ENCODE measurements at regions of chr1 and their contacts with region 1.

Region 1: DNA sequence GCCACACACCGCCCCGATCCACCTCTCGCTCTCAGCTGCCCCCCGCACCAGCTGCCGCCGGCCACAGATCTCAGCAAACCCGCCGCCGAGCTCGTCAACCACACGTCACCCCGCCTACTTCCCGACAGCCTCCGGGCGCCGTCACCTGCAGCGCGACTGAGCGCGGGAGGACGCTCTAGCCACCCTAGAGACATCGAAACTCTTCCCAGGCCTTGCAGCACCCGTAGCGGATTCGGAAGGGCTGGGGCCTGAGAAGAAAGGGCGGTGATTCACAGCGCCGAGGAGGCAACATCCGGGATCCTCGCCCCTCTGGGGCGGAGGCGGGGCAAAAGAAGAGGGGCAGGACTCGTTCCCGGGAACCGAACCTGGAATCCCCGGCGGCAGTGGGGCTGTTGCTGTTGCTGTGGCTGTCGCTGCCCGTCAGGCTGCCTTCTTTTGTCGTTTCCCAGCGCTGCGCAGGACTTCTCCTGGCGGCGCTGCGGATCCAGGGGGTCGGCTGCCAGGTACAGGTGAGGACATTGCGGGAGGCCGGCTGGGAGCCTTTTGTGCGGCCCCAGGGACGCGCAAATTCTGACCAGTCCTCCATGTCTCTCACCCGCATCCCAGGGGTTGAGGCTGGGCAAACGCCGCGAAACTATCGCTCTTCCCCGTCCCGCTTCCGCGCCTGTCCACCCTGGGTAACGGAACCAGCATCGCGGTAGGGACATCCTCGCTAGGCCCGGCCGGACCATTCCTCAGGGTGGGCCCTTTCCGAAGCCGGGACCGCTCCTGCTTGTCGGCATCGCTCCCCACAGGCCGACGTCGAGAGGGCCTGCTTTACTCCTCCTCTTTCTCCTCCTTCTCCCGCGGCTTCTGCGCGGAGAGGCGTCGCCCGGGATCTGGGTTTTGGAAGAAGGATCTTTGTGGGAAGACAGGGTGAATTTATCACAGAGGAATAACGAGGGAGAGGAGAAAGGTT is at the starts of genes RO60 and UCHL5:
- DNase-seq: peak; percentile 79 to 96 (median 94)
- ATAC-seq: peak; percentile 98
- H3K4me3 ChIP-seq: peak within 1 kb of the TSS; percentile 96
- H3K4me3 Mint-ChIP-seq: peak within 1 kb of the TSS; percentile 93 to 100 (median 98)
- H3K27ac ChIP-seq: peak within 1 kb of the TSS; percentile 89
- H3K27ac Mint-ChIP-seq: peak within 1 kb of the TSS; percentile 97 to 100 (median 98)
- H3K4me1 ChIP-seq: peaks cover 22 to 30% of the 10 kb centered on the region in 2 donors
- H3K4me1 Mint-ChIP-seq: peaks cover 47 to 78% (median 72%) of the 10 kb centered on the region in 7 donors
- H3K27me3 ChIP-seq: no peaks in the 10 kb centered on the region
- H3K27me3 Mint-ChIP-seq: no peaks in the 10 kb centered on the region
- total RNA-seq, gene RO60: 49.8 to 75.1 (median 67.2) TPM
- total RNA-seq, gene UCHL5: 20.2 to 48.6 (median 31.8) TPM

Region 2: DNA sequence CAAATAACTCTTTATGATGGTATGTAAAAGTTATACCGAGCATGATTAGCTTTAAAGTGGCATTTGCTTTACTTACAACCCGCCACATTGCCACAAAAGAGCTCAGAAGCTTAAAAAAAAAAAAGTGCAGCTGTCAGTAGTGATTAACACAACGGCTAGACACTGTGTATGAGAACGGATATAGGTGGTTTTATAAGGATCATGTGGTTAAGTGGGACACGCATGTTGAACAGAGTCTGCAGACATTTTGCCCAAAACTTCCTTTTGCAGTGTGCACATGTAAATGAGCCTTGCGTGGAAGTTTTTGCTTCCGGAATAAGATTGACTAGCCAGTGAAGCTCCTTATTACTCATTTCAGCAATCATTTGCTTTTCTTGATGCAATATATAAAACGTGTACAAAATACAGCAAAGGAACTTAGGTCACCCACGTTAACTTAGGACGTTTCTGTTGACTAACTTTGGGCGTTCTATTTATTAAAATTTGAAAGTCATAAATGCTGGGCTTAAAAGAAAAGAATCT is 542.7 kb before region 1 on chr1:
- CTCF ChIA-PET with region 1: no interaction called
- POLR2A ChIA-PET with region 1: interaction called, 3 read pairs
- intact Hi-C with region 1: loop called (anchors 1 kb)
- DNase-seq: peak in 8 of 9 donors; percentile 46 to 91 (median 87)
- ATAC-seq: peak; percentile 96
- H3K4me3 ChIP-seq: peak overlapping the region; percentile 27
- H3K4me3 Mint-ChIP-seq: peak overlapping the region; percentile 42 to 86 (median 78)
- H3K27ac ChIP-seq: peak overlapping the region; percentile 60
- H3K27ac Mint-ChIP-seq: peak overlapping the region; percentile 77 to 98 (median 93)
- H3K4me1 ChIP-seq: peaks cover 18 to 21% of the 10 kb centered on the region in 2 donors
- H3K4me1 Mint-ChIP-seq: peaks cover 32 to 56% (median 44%) of the 10 kb centered on the region in 7 donors
- H3K27me3 ChIP-seq: no peaks in the 10 kb centered on the region
- H3K27me3 Mint-ChIP-seq: no peaks in the 10 kb centered on the region

Region 3: GRCh38 chr1:193042766-193043691 is 16.5 kb before region 1 on chr1:
- CTCF ChIA-PET with region 1: no interaction called
- POLR2A ChIA-PET with region 1: interaction called, 8 read pairs
- intact Hi-C with region 1: loop called in 1 of 2 experiments (anchors 1 kb)
- DNase-seq: no peak
- ATAC-seq: no peak
- H3K4me3 ChIP-seq: no peak overlapping the region
- H3K4me3 Mint-ChIP-seq: no peak overlapping the region
- H3K27ac ChIP-seq: no peak overlapping the region
- H3K27ac Mint-ChIP-seq: peak overlapping the region in 5 of 9 donors; percentile 3 to 74 (median 36)
- H3K4me1 ChIP-seq: no peaks in the 10 kb centered on the region
- H3K4me1 Mint-ChIP-seq: peaks cover 9 to 31% (median 23%) of the 10 kb centered on the region in 7 donors
- H3K27me3 ChIP-seq: no peaks in the 10 kb centered on the region
- H3K27me3 Mint-ChIP-seq: no peaks in the 10 kb centered on the region

Region 4: DNA sequence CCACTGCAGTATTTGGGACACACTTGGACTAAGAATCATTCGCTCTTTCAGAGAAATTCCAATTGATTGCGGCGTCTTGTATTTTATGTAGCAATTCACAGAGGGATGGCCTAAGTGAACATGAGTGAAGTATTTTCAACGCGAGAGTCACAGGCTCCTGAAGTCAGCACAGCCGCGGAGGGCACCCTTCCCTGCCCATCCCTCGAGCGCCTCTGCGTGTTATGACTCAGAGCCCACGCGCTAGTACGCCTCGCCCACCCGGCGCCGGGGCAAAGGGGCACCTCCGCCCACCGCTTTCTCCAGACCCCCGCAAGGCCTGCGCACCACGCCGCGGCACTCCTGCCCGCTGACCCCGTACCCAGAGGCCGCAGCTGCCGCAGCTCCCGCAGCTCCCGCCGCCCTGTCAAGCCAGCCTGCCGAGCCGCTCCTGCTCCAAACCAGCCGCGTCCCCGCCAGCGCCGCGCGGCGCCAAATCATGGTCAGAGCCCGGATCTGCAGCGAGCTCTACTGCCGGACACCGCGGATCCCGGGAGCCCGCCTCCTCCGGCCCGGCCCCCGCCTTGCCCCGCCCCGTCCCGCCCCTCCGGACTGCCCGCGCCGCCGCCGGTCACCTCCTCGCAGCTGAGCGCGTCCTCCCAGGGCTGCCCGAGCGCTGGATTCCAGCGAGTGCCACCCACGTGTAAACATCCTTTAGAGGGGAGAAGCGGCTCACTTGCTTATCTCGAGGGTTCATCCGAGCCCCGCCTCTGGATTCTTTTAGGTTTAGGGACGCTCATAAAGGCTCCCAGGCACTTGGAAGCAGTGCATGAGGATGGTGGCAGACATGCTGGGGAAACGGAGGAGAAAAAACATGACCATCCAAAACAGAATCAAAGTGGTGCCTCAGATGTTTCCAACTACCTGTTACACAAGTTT is 45.6 kb after region 1 on chr1 and contains the start of gene GLRX2:
- CTCF ChIA-PET with region 1: no interaction called
- POLR2A ChIA-PET with region 1: interaction called, 7 read pairs
- intact Hi-C with region 1: loop called (anchors 1 kb)
- DNase-seq: peak; percentile 30 to 68 (median 48)
- ATAC-seq: peak; percentile 91
- H3K4me3 ChIP-seq: peak within 1 kb of the TSS; percentile 67
- H3K4me3 Mint-ChIP-seq: peak within 1 kb of the TSS; percentile 91 to 98 (median 94)
- H3K27ac ChIP-seq: peak within 1 kb of the TSS; percentile 57
- H3K27ac Mint-ChIP-seq: peak within 1 kb of the TSS; percentile 75 to 94 (median 81)
- H3K4me1 ChIP-seq: peaks cover 3 to 16% of the 10 kb centered on the region in 2 donors
- H3K4me1 Mint-ChIP-seq: peaks cover 13 to 28% (median 21%) of the 10 kb centered on the region in 7 donors
- H3K27me3 ChIP-seq: no peaks in the 10 kb centered on the region
- H3K27me3 Mint-ChIP-seq: peaks cover 0 to 9% (median 0%) of the 10 kb centered on the region in 5 donors
- total RNA-seq, gene GLRX2: 6.8 to 18.8 (median 11.4) TPM

Region 5: DNA sequence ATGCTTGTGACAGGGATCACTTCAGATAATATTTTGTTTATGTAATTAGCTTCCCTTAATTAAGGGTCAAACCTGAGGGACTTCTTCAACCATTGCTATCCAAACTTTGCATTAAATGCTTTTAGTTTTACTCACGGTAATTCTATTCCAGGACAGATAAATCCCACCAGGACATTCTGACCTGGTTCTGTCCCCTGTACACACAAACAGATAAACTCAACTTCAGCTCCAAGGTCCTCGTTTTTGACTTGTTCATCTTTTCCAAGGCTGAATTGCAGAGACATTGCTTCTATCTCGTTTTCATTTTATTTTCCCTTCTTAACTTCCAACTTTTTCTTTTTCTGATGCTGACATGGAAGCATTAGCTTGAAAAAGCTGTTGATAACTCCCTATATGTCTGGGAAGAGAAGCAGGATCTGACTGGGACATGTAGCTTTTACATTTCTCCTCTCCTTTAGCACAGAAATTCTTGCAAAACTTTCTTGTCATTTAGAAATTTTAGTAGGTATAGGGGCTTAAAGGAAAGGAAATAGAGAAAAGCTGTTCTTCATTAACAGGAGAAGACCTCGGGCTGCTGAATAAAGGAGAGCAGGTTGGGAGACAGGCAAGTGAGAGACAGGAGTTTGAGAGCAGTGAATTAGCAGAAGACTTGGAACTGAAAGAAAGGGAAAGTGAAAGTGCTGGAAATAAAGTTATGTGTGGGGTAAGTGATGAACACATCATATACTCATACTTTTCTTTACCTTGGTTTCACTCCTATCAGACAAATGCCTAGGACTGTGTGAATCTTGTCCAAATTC is 358.6 kb after region 1 on chr1:
- CTCF ChIA-PET with region 1: no interaction called
- POLR2A ChIA-PET with region 1: no interaction called
- intact Hi-C with region 1: loop called in 1 of 2 experiments (anchors 10 kb)
- DNase-seq: peak in 7 of 9 donors; percentile 16 to 64 (median 47)
- ATAC-seq: peak; percentile 81
- H3K4me3 ChIP-seq: peak overlapping the region; percentile 45
- H3K4me3 Mint-ChIP-seq: peak overlapping the region; percentile 68 to 93 (median 87)
- H3K27ac ChIP-seq: peak overlapping the region; percentile 58
- H3K27ac Mint-ChIP-seq: peak overlapping the region; percentile 88 to 95 (median 91)
- H3K4me1 ChIP-seq: peaks cover 16 to 19% of the 10 kb centered on the region in 2 donors
- H3K4me1 Mint-ChIP-seq: peaks cover 15 to 57% (median 46%) of the 10 kb centered on the region in 7 donors
- H3K27me3 ChIP-seq: no peaks in the 10 kb centered on the region
- H3K27me3 Mint-ChIP-seq: no peaks in the 10 kb centered on the region

Region 6: GRCh38 chr1:193629875-193630274 is 570.3 kb after region 1 on chr1:
- CTCF ChIA-PET with region 1: no interaction called
- POLR2A ChIA-PET with region 1: no interaction called
- intact Hi-C with region 1: no loop called
- DNase-seq: no peak
- ATAC-seq: no peak
- H3K4me3 ChIP-seq: no peak overlapping the region
- H3K4me3 Mint-ChIP-seq: no peak overlapping the region
- H3K27ac ChIP-seq: no peak overlapping the region
- H3K27ac Mint-ChIP-seq: no peak overlapping the region
- H3K4me1 ChIP-seq: no peaks in the 10 kb centered on the region
- H3K4me1 Mint-ChIP-seq: peaks cover 5 to 14% (median 10%) of the 10 kb centered on the region in 7 donors
- H3K27me3 ChIP-seq: no peaks in the 10 kb centered on the region
- H3K27me3 Mint-ChIP-seq: peaks cover 0 to 9% (median 0%) of the 10 kb centered on the region in 5 donors

Region 7: DNA sequence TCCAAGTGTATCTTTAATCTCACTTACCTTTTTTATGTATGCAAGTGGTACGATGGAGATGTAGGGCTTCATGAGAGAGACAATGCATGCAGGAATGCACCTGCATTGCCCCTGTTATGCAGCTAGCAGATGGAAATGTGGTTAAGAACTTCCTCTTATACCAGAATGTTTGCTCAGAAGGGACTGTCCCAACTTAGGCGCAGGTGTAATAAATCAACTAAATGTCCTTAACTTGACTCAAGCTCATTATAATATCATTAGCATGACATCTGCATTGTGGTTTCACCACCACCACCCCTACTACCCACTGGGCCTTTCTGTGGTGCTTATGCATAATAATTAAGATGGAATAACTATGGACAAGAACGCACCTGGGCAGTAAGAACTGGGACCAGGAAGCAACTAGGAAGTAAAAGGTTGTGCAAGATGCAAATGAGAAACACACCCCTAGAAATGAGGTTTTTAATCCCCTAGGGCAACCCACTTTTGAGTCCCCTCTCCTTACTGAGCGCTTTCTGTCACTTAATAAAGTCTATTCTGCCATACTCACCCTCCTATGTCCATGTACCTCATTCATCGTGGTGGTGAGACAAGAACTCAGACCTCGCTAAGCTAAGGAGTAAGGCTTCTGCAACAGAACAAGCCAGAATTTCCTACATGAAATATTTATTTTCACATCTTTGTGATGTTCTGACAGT is 1230.2 kb after region 1 on chr1:
- CTCF ChIA-PET with region 1: interaction called, 3 read pairs
- POLR2A ChIA-PET with region 1: no interaction called
- intact Hi-C with region 1: loop called (anchors 2 to 10 kb)
- DNase-seq: peak in 8 of 9 donors; percentile 23 to 84 (median 76)
- ATAC-seq: peak; percentile 97
- H3K4me3 ChIP-seq: peak overlapping the region; percentile 0
- H3K4me3 Mint-ChIP-seq: peak overlapping the region; percentile 38 to 71 (median 54)
- H3K27ac ChIP-seq: no peak overlapping the region
- H3K27ac Mint-ChIP-seq: peak overlapping the region in 7 of 9 donors; percentile 43 to 84 (median 69)
- H3K4me1 ChIP-seq: peaks cover 14 to 21% of the 10 kb centered on the region in 2 donors
- H3K4me1 Mint-ChIP-seq: peaks cover 5 to 47% (median 40%) of the 10 kb centered on the region in 7 donors
- H3K27me3 ChIP-seq: no peaks in the 10 kb centered on the region
- H3K27me3 Mint-ChIP-seq: no peaks in the 10 kb centered on the region